Head of caudate nucleus (tissue), 42 donors: ENCODE measurements at regions of chr5 and their contacts with region 1.

Region 1: DNA sequence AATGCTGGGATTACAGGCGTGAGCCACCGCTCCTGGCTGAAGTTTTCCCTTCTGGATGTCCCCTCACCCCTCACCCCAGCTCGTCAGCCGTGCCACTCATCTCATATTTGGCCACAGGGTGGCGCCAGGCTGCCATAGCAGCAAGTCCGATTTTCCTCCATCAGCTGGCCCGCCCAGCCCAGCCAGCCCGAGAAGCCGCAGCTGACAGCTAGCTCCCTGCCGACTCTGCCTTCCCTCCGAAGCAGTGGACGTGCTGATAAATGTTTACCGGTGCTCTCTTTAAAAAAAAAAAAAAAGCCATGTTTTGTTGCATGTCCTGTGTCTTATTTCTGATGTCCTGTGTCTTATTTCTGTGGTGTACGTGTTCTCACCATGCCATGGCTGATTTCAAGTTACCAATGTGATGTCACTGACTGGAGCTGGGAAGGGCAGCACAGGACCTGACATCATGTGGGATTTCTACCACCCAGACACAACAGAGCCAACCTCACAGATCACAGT is 58.3 kb downstream of the PFDN1 start:
- DNase-seq: peak; percentile 88 to 97 (median 93)

Region 2: DNA sequence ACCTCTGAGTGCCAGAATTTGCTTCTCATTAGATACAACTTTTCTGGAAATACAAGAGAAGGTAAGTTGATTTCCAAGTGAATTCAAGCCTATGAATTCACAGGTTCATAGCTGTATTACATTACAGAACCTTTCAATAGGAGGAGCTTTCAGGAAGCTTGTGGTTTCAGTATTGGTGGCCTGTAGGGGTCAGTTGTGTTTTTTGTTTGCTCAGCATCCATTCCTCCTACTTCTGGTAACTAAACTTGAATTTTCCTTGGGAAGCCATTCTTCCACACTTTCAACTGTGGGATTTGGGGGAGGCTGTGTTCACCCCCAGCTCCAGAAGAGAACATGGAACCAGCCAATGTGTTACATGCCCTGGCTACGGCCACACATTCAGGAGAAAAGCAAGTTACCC is 75.2 kb before region 1 on chr5:
- intact Hi-C with region 1: loop called (anchors 10 kb)
- DNase-seq: no peak

Region 3: GRCh38 chr5:140302786-140303639 is 58.4 kb after region 1 on chr5 and contains the start of gene PFDN1:
- intact Hi-C with region 1: loop called (anchors 10 kb)
- DNase-seq: peak; percentile 87 to 98 (median 95)

Region 4: DNA sequence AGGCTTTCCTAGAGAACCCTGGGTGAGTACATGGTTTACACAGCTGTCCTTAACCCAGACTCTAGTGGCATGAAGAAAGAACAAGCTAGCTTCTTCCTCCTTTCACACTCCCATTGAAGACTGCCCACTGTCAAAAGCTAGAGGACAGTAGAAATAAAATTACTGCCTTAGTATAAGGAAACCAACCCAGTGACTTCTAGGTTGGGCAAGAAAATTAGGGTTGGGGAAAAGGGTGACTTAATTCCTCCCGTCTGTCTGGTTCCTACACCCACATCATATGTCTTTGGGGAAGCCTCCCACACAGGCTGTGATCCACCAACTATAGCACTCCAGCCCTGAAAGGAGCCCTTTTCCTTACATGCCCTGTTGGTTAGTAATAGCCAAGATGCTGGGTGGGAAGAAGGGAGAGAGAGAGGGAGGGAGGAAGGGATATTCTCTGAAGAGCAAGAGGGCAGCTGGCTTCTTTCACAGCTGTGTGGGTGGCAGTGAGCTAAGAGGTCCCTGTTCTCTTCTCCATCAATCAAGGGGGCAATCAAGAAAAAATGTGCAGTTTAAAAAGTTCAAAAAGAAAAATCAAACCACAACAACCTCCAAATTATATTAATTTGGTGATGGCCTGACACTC is 80.2 kb after region 1 on chr5:
- intact Hi-C with region 1: no loop called
- DNase-seq: no peak

Region 5: GRCh38 chr5:140346348-140347101 is 102.0 kb after region 1 on chr5 and contains the start of gene HBEGF:
- intact Hi-C with region 1: loop called (anchors 2 kb)
- DNase-seq: peak; percentile 61 to 94 (median 87)